ENCODE measurements at regions of chr3 and their contacts with region 1.

Region 1: GRCh38 chr3:108477511-108478147 is 32.8 kb downstream of the MYH15 start:
- DNase-seq: peak; percentile 50 to 82 (median 72)
- H3K4me3 ChIP-seq: no peak overlapping the region
- H3K27ac ChIP-seq: no peak overlapping the region
- H3K4me1 ChIP-seq: no peaks in the 10 kb centered on the region
- H3K27me3 ChIP-seq: no peaks in the 10 kb centered on the region
- CTCF ChIP-seq: peak; percentile 64 to 82 (median 73)
- POLR2A ChIP-seq: no peak

Region 2: DNA sequence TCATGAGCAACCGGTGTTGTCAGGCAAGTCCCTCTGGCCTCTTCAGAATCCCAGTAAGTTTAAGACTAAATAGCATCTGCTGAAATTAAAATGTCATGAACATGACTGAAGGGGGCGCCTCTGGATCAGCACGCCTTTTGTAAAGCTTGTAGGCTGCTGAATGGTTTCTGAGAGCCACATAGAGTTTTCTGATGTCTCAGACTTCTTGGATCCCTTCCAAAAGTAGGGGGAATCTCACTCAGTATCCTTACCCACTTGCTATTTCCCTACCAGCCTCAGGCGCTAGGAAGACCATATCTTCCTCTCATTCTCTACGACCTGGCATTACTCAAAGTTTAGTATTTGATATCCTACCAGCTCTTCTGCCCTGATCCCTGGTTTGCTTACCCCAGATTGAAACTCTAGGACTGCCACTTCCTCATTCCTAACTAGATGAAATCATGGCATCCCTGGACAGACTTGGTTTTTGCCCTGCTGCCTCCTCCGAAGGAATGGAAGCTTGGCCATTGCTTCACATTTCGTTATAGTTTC is 324.1 kb before region 1 on chr3:
- intact Hi-C with region 1: loop called in 1 of 2 experiments (anchors 10 kb)
- DNase-seq: peak; percentile 32 to 73 (median 50)
- H3K4me3 ChIP-seq: no peak overlapping the region
- H3K27ac ChIP-seq: no peak overlapping the region
- H3K4me1 ChIP-seq: no peaks in the 10 kb centered on the region
- H3K27me3 ChIP-seq: no peaks in the 10 kb centered on the region
- CTCF ChIP-seq: peak; percentile 43 to 58 (median 55)
- POLR2A ChIP-seq: no peak

Region 3: GRCh38 chr3:108589146-108589997 is 111.7 kb after region 1 on chr3 and contains the starts of genes CIP2A and DZIP3:
- intact Hi-C with region 1: no loop called
- DNase-seq: peak; percentile 81 to 92 (median 87)
- H3K4me3 ChIP-seq: peak within 1 kb of the TSS; percentile 7 to 80 (median 62)
- H3K27ac ChIP-seq: peak within 1 kb of the TSS; percentile 48 to 95 (median 90)
- H3K4me1 ChIP-seq: peaks cover 3 to 23% of the 10 kb centered on the region in 2 donors
- H3K27me3 ChIP-seq: no peaks in the 10 kb centered on the region
- CTCF ChIP-seq: peak in 3 of 6 experiments; percentile 12 to 41 (median 18)
- POLR2A ChIP-seq: peak; percentile 68 to 72
- total RNA-seq, gene CIP2A: 1.9 to 16.6 (median 3.9) TPM
- total RNA-seq, gene DZIP3: 9.6 to 39.3 (median 16.1) TPM

Measured in adrenal gland (tissue), 19 donors.